PC-3 (cell line): ENCODE measurements at regions of chr19 and their contacts with region 1.

Region 1: GRCh38 chr19:45824531-45825262 is 9.6 kb upstream of the RSPH6A start:
- DNase-seq: no peak
- ATAC-seq: no peak
- H3K4me3 ChIP-seq: no peak overlapping the region
- H3K27ac ChIP-seq: no peak overlapping the region
- H3K4me1 ChIP-seq: no peaks in the 10 kb centered on the region
- H3K27me3 ChIP-seq: no peaks in the 10 kb centered on the region
- CTCF ChIP-seq: no peak

Region 2: GRCh38 chr19:45730389-45731288 is 94.1 kb before region 1 on chr19 and contains the start of gene FBXO46:
- CTCF ChIA-PET with region 1: no interaction called
- POLR2A ChIA-PET with region 1: interaction called, 22 read pairs
- intact Hi-C with region 1: no loop called
- DNase-seq: peak; percentile 95
- ATAC-seq: peak; percentile 99
- H3K4me3 ChIP-seq: peak within 1 kb of the TSS; percentile 86
- H3K27ac ChIP-seq: no peak within 1 kb of the TSS
- H3K4me1 ChIP-seq: no peaks in the 10 kb centered on the region
- H3K27me3 ChIP-seq: no peaks in the 10 kb centered on the region
- CTCF ChIP-seq: 0 out of 2 replicates have a peak, but pooled peaks have one; percentile 19
- total RNA-seq, gene FBXO46: 12.8 and 16.1 TPM in 2 replicates

Region 3: DNA sequence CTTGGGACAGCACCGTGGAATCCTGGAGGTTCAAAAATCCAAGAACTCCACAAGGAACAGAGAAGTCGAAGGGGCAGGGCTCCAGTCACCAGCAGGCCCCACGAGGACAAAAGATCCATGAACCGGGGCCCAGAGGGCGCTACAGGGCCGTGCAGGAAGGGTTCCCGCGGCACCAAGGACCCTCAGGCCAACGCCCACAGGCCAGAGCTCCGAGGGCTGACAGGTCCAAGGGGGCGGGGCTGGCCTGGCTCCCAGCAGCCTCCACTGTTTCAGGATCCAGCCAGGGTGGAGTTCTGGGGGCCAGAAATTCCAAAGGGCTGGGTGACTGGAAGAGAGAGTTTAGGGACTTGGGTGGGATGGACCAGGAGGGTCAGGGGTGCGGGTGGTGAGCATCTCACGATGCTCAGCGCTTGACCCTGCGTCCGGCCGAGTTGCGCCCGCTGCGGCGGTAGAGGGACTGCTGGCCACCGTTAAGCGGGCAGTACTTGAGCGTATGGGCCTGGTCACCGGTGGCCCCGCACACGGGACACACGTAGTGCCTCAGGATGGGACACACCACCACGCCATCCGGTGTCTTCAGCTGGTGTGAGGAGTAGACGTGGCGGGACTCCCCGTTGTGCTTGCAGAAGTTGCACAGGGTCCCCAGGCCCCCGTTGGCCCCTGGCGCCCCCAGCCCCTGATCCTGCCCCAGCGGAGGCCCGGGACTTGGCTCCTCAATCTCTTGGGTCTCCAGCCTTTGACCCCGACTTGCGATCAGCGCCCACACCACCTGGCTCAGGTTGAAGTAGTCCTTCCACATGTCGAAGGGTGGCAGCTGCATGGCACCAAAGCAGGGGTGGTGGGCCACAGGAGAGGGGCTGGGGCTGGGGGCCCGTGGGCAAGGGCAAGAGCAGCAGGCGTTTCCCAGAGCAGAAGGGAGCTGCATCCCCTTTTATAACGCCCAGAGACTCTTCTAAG is 89.5 kb after region 1 on chr19 and contains the start of gene NANOS2:
- CTCF ChIA-PET with region 1: no interaction called
- POLR2A ChIA-PET with region 1: no interaction called
- intact Hi-C with region 1: no loop called
- DNase-seq: peak; percentile 13
- ATAC-seq: no peak
- H3K4me3 ChIP-seq: no peak within 1 kb of the TSS
- H3K27ac ChIP-seq: no peak within 1 kb of the TSS
- H3K4me1 ChIP-seq: no peaks in the 10 kb centered on the region
- H3K27me3 ChIP-seq: no peaks in the 10 kb centered on the region
- CTCF ChIP-seq: peak; percentile 28; the same call in 1 of the 2 replicates
- total RNA-seq, gene NANOS2: not detected in 2 replicates